ENCODE measurements at regions of chr16 and their contacts with region 1.

Region 1: DNA sequence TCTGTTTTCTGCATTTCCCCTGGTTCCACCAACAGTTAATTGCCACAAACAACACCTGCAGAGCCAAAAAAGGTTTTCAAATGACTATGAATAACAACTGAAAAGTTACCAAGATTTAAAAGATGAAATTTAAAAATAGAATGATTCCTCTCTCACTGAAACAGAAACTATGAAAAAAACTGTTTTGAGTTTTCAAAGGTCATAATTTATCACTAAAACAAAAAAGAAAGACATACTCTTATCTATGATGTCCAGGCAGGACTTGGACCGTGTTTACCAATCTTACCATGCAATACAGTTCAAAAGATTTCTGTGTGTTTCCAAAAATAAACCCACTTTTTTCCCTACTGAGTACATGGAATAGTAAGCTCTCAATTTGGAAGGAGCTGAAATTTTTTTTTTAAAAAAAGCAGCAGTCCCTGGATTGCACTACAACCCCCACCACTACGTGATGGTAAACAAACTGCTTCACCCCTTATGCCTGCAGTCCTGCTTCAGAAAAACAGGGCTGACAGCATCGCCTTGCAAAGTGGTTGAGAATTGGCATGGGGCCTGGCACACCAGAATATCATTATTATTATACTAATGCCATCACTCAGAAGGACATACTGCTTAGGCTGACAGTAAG is 8.5 kb downstream of the TXNDC11 start:
- DNase-seq: no peak
- H3K4me3 ChIP-seq: no peak overlapping the region
- H3K27ac ChIP-seq: no peak overlapping the region
- H3K4me1 ChIP-seq: no peaks in the 10 kb centered on the region
- H3K27me3 ChIP-seq: no peaks in the 10 kb centered on the region
- CTCF ChIP-seq: no peak

Region 2: GRCh38 chr16:11560701-11561449 is 173.3 kb before region 1 on chr16:
- CTCF ChIA-PET with region 1: no interaction called
- dilution Hi-C with region 1: loop called (anchors 10 kb)
- in situ Hi-C with region 1: no loop called
- intact Hi-C with region 1: no loop called
- DNase-seq: peak; percentile 92
- H3K4me3 ChIP-seq: peak overlapping the region in 1 of 3 experiments; percentile 20
- H3K27ac ChIP-seq: peak overlapping the region; percentile 92
- H3K4me1 ChIP-seq: peaks cover 37% of the 10 kb centered on the region
- H3K27me3 ChIP-seq: no peaks in the 10 kb centered on the region
- CTCF ChIP-seq: no peak

Region 3: GRCh38 chr16:12017558-12017957 is 283.4 kb after region 1 on chr16:
- CTCF ChIA-PET with region 1: no interaction called
- dilution Hi-C with region 1: no loop called
- in situ Hi-C with region 1: no loop called
- intact Hi-C with region 1: no loop called
- DNase-seq: no peak
- H3K4me3 ChIP-seq: no peak overlapping the region
- H3K27ac ChIP-seq: no peak overlapping the region
- H3K4me1 ChIP-seq: peaks cover 9% of the 10 kb centered on the region
- H3K27me3 ChIP-seq: no peaks in the 10 kb centered on the region
- CTCF ChIP-seq: no peak

Region 4: GRCh38 chr16:12837756-12838155 is 1103.6 kb after region 1 on chr16:
- CTCF ChIA-PET with region 1: no interaction called
- dilution Hi-C with region 1: no loop called
- in situ Hi-C with region 1: no loop called
- intact Hi-C with region 1: no loop called
- DNase-seq: no peak
- H3K4me3 ChIP-seq: no peak overlapping the region
- H3K27ac ChIP-seq: no peak overlapping the region
- H3K4me1 ChIP-seq: no peaks in the 10 kb centered on the region
- H3K27me3 ChIP-seq: no peaks in the 10 kb centered on the region
- CTCF ChIP-seq: no peak

Measured in mammary epithelial cell (primary cell).